B cell (primary cell): ENCODE measurements at regions of chr5 and their contacts with region 1.

Region 1: DNA sequence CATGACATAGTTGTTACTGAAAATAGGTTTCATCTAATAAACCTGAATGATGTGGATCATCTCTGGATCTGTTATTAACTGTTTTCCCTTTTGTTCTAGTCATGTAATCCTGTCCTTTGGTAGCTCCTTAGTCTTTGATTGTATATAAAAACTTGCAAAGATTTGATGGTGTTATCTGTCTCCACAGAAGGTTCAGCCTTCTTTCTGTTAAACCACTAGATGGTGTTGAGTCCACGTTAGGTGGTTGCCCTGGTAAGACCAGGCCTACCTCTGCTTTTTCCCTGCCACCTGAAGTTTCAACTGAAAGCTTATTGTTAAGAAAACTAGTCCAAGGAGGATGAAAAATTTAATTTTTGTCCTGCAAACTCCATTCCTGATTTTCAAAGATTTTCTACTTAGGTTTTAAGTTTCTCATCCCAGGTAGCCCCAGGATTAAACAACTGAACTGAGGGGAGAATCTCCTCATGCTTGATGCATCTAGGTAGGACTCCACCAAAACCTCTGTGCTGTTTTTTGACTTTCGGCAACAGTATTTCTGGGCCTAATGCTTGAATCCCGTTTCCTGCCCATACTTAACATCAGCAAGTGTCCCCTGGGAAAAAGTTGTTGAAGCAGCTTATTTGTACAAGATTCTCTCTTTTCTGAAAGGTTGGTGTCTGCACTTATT is 68.5 kb downstream of the RICTOR start:
- DNase-seq: peak; percentile 18
- ATAC-seq: no peak
- H3K4me3 ChIP-seq: no peak overlapping the region
- H3K4me3 Mint-ChIP-seq: no peak overlapping the region
- H3K27ac ChIP-seq: no peak overlapping the region
- H3K27ac Mint-ChIP-seq: no peak overlapping the region
- H3K4me1 ChIP-seq: no peaks in the 10 kb centered on the region
- H3K4me1 Mint-ChIP-seq: peaks cover 18% of the 10 kb centered on the region
- H3K27me3 ChIP-seq: no peaks in the 10 kb centered on the region
- H3K27me3 Mint-ChIP-seq: no peaks in the 10 kb centered on the region
- CTCF ChIP-seq: peak; percentile 33

Region 2: GRCh38 chr5:38953426-38953825 is 52.3 kb before region 1 on chr5:
- CTCF ChIA-PET with region 1: no interaction called
- POLR2A ChIA-PET with region 1: no interaction called
- intact Hi-C with region 1: no loop called
- DNase-seq: no peak
- ATAC-seq: no peak
- H3K4me3 ChIP-seq: no peak overlapping the region
- H3K4me3 Mint-ChIP-seq: no peak overlapping the region
- H3K27ac ChIP-seq: no peak overlapping the region
- H3K27ac Mint-ChIP-seq: no peak overlapping the region
- H3K4me1 ChIP-seq: no peaks in the 10 kb centered on the region
- H3K4me1 Mint-ChIP-seq: no peaks in the 10 kb centered on the region
- H3K27me3 ChIP-seq: no peaks in the 10 kb centered on the region
- H3K27me3 Mint-ChIP-seq: no peaks in the 10 kb centered on the region
- CTCF ChIP-seq: no peak

Region 3: DNA sequence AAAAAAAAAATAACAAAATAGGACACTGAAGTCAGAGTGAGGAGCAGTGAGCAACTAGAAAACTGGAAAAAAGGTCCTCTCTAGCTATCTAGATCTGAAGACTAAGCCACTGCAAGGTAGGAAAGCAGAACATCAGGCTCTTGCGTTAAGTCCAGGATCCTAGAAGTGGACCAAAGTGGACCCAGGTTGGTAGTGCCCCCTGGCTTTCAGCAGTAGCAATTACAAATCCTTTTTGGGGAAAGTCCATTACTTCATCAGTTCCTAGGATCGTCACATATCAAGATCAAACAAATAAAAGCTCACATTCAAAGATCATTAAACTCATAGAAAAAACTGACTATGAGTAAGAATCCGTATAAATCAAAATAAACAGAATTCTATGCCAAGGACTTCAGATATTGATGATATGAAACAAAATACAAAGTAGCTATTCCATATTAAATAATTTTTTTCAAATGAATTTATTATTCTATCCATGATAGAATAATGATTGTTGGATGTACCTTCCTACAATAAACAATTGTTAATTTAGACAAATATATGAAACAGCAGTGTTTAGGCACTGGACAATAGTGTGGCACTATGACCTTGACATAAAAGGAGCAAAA is 75.0 kb after region 1 on chr5:
- CTCF ChIA-PET with region 1: interaction called, 47 read pairs
- POLR2A ChIA-PET with region 1: no interaction called
- intact Hi-C with region 1: loop called (anchors 2 kb)
- DNase-seq: peak; percentile 55
- ATAC-seq: peak; percentile 37
- H3K4me3 ChIP-seq: no peak overlapping the region
- H3K4me3 Mint-ChIP-seq: no peak overlapping the region
- H3K27ac ChIP-seq: no peak overlapping the region
- H3K27ac Mint-ChIP-seq: no peak overlapping the region
- H3K4me1 ChIP-seq: peaks cover 10 to 16% of the 10 kb centered on the region in 2 donors
- H3K4me1 Mint-ChIP-seq: peaks cover 23% of the 10 kb centered on the region
- H3K27me3 ChIP-seq: no peaks in the 10 kb centered on the region
- H3K27me3 Mint-ChIP-seq: peaks cover 3% of the 10 kb centered on the region
- CTCF ChIP-seq: peak; percentile 76